Endothelial cell of umbilical vein (primary cell): ENCODE measurements at regions of chr11 and their contacts with region 1.

Region 1: DNA sequence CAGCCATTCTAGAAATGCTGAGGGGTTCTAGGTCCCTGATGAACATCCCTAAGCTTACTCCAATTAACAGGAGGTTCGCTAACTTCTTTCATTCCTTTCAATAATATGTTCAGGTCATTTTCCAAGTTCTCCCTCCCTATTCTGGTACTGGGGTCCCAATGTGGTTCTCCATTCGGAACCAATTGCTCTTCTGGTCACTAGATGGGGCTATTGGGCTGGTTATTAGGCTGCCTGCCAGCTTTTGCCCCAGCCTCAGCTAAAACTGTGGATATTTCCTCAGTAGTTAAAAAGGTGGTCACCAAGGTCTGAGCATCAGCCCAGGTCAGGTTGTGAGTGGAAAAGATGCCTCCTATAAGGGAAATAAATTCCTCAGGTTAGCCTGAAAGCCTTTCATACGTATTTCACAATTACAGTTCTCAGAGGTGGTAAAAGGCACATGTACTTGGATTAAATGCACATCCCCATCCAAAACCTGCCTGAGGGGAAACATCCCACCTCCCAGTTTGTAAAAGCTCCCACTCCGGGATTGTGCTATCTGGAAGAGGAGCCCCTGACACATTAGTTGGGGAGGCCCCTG is 161.1 kb upstream of the CCDC179 start:
- DNase-seq: peak; percentile 33
- H3K4me3 ChIP-seq: no peak overlapping the region
- H3K27ac ChIP-seq: no peak overlapping the region
- H3K4me1 ChIP-seq: no peaks in the 10 kb centered on the region
- H3K27me3 ChIP-seq: no peaks in the 10 kb centered on the region
- CTCF ChIP-seq: peak; percentile 60 to 66
- POLR2A ChIP-seq: no peak

Region 2: GRCh38 chr11:22920939-22921565 is 100.3 kb before region 1 on chr11:
- CTCF ChIA-PET with region 1: no interaction called
- POLR2A ChIA-PET with region 1: no interaction called
- dilution Hi-C with region 1: no loop called
- intact Hi-C with region 1: loop called (anchors 5 kb)
- DNase-seq: peak; percentile 65
- H3K4me3 ChIP-seq: no peak overlapping the region
- H3K27ac ChIP-seq: no peak overlapping the region
- H3K4me1 ChIP-seq: peaks cover 6% of the 10 kb centered on the region
- H3K27me3 ChIP-seq: no peaks in the 10 kb centered on the region
- CTCF ChIP-seq: peak; percentile 74 to 84
- POLR2A ChIP-seq: no peak

Region 3: GRCh38 chr11:24324211-24324610 is 1302.8 kb after region 1 on chr11:
- CTCF ChIA-PET with region 1: interaction called, 20 read pairs
- POLR2A ChIA-PET with region 1: no interaction called
- dilution Hi-C with region 1: no loop called
- intact Hi-C with region 1: loop called (anchors 5 kb)
- DNase-seq: peak; percentile 55
- H3K4me3 ChIP-seq: no peak overlapping the region
- H3K27ac ChIP-seq: no peak overlapping the region
- H3K4me1 ChIP-seq: peaks cover 7% of the 10 kb centered on the region
- H3K27me3 ChIP-seq: no peaks in the 10 kb centered on the region
- CTCF ChIP-seq: no peak
- POLR2A ChIP-seq: no peak

Region 4: GRCh38 chr11:24386546-24387397 is 1365.4 kb after region 1 on chr11:
- CTCF ChIA-PET with region 1: interaction called, 47 read pairs
- POLR2A ChIA-PET with region 1: no interaction called
- dilution Hi-C with region 1: no loop called
- intact Hi-C with region 1: loop called (anchors 1 kb)
- DNase-seq: peak; percentile 38
- H3K4me3 ChIP-seq: no peak overlapping the region
- H3K27ac ChIP-seq: no peak overlapping the region
- H3K4me1 ChIP-seq: no peaks in the 10 kb centered on the region
- H3K27me3 ChIP-seq: no peaks in the 10 kb centered on the region
- CTCF ChIP-seq: peak; percentile 18 to 30
- POLR2A ChIP-seq: no peak